ENCODE measurements at regions of chr15 and their contacts with region 1.

Region 1: DNA sequence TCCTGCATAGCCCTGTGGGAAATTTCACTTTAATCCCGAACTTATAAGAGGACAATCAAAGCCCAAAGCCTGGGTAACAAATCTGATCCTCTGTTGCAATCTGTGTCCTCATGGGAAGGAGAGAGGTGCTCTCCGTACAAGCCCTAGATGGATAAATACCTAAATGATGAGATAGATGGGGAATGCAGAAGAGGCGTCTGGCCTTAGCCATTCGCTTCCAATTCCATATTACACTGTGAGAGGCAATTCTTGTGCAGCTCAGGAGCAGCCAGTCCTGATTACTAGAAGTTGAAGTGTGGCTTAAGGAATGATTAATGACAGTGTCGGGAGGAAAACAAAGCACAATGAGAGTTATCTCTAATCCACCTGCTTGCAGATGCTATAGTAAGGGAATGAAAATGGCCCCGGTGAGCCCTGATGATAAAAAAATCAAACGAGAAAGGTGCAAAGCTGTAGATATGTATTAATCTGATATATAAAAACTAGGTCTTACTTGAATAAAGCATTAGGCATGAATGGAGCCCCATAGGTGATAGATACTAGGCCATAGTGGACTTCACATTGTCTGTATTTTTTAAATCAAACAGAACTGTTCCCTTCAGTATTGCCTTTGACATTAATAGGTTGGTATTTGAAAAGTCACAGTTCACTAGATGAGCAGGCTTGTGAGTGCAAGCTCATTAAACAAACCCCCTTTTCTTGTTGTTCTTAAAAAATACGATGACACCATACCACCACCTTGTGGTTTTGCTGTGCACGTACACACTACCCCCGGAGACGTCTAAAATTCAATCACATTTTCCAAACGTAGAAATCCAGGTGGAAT is 54.2 kb upstream of the TMCO5A start:
- DNase-seq: peak in 1 of 2 experiments; percentile 35
- H3K4me3 ChIP-seq: no peak overlapping the region
- H3K4me3 Mint-ChIP-seq: no peak overlapping the region
- H3K27ac Mint-ChIP-seq: no peak overlapping the region
- H3K4me1 ChIP-seq: no peaks in the 10 kb centered on the region
- H3K4me1 Mint-ChIP-seq: no peaks in the 10 kb centered on the region
- H3K27me3 ChIP-seq: no peaks in the 10 kb centered on the region
- H3K27me3 Mint-ChIP-seq: peaks cover 35% of the 10 kb centered on the region
- CTCF ChIP-seq: peak; percentile 76 to 77

Region 2: DNA sequence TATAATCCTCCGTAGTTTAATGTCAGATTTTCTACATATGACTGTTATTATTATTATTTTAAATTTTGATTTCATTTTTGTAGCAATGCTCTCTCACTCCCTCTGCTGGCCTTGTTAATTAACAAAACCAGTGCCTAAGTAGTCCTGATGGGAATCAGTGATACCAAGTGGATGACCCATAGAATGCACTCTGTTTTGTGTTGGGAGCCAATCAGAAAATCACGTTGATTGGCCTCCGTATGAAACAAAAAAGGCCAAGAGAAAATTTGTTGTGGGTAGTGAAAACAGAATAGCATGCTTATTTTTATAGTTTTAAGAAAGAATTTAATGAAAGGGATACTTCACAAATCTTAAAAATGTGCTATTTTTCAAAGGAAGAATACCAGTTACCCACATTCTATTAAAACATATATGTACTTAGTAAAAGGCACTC is 745.5 kb before region 1 on chr15:
- CTCF ChIA-PET with region 1: no interaction called
- POLR2A ChIA-PET with region 1: no interaction called
- intact Hi-C with region 1: loop called (anchors 10 kb)
- DNase-seq: peak in 1 of 2 experiments; percentile 43
- H3K4me3 ChIP-seq: no peak overlapping the region
- H3K4me3 Mint-ChIP-seq: no peak overlapping the region
- H3K27ac Mint-ChIP-seq: no peak overlapping the region
- H3K4me1 ChIP-seq: peaks cover 12% of the 10 kb centered on the region; the same call in 1 of the 2 replicates
- H3K4me1 Mint-ChIP-seq: peaks cover 15% of the 10 kb centered on the region
- H3K27me3 ChIP-seq: no peaks in the 10 kb centered on the region
- H3K27me3 Mint-ChIP-seq: no peaks in the 10 kb centered on the region
- CTCF ChIP-seq: peak; percentile 51 to 67

Region 3: DNA sequence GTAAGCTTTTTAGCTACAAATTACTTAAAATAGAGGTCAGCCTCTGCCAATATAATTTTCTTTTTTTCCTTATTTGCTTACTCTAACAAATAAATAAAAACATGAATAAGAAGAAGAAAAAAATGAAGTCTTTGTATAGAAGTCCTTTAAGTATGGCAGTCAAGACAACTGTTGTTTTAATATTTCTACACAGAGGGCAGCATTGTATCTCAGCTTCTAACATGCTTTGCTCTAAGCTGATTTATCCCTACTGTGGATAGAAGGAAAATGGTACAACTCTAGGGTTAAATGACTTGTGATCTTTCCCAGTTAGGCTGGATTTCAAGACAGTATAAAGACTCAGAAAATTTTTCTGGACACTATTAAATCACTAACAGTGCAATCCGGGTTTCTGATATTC is 675.5 kb before region 1 on chr15:
- CTCF ChIA-PET with region 1: interaction called, 5 read pairs
- POLR2A ChIA-PET with region 1: no interaction called
- intact Hi-C with region 1: loop called (anchors 10 kb)
- DNase-seq: peak in 1 of 2 experiments; percentile 5
- H3K4me3 ChIP-seq: no peak overlapping the region
- H3K4me3 Mint-ChIP-seq: no peak overlapping the region
- H3K27ac Mint-ChIP-seq: no peak overlapping the region
- H3K4me1 ChIP-seq: peaks cover 7% of the 10 kb centered on the region; the same call in 1 of the 2 replicates
- H3K4me1 Mint-ChIP-seq: no peaks in the 10 kb centered on the region
- H3K27me3 ChIP-seq: no peaks in the 10 kb centered on the region
- H3K27me3 Mint-ChIP-seq: peaks cover 4% of the 10 kb centered on the region
- CTCF ChIP-seq: peak; percentile 15 to 19

Region 4: DNA sequence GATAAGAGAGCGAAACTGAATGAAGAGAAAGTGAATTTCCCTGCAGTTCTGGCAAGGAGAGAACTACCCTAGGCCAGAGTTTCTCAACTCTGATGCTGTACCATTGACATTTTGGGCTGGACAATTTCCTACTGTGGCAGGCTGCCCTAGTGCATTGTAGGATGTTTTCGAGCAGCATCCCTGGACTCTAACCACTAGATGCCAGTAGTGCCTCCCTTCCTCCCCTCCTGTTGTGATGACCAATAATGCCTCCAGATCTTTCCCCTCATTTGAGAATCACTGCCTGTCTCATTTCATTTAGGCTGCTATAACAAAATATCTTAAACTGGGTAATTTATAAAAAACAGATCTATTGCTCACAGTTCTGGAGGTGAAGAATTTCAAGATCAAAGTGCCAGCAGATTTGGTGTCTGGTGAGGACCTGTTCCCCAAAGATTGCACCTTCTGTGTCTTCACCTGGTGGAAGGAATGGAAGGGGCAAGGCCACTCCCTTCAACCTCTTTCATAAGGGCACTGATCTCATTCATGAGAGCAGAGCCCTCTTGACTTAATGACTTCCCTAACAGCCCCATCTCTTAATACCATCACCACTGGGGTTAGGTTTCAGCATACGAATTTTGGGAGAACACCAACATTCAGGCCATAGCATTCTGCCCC is 591.0 kb before region 1 on chr15:
- CTCF ChIA-PET with region 1: no interaction called
- POLR2A ChIA-PET with region 1: no interaction called
- intact Hi-C with region 1: loop called (anchors 1 kb)
- DNase-seq: peak; percentile 26 to 41
- H3K4me3 ChIP-seq: no peak overlapping the region
- H3K4me3 Mint-ChIP-seq: no peak overlapping the region
- H3K27ac Mint-ChIP-seq: no peak overlapping the region
- H3K4me1 ChIP-seq: no peaks in the 10 kb centered on the region
- H3K4me1 Mint-ChIP-seq: no peaks in the 10 kb centered on the region
- H3K27me3 ChIP-seq: no peaks in the 10 kb centered on the region
- H3K27me3 Mint-ChIP-seq: peaks cover 7% of the 10 kb centered on the region
- CTCF ChIP-seq: peak in 1 of 2 experiments; percentile 48

Region 5: GRCh38 chr15:37682304-37682703 is 197.9 kb before region 1 on chr15:
- CTCF ChIA-PET with region 1: no interaction called
- POLR2A ChIA-PET with region 1: no interaction called
- intact Hi-C with region 1: loop called (anchors 1 kb)
- DNase-seq: peak in 1 of 2 experiments; percentile 34
- H3K4me3 ChIP-seq: no peak overlapping the region
- H3K4me3 Mint-ChIP-seq: no peak overlapping the region
- H3K27ac Mint-ChIP-seq: no peak overlapping the region
- H3K4me1 ChIP-seq: no peaks in the 10 kb centered on the region
- H3K4me1 Mint-ChIP-seq: no peaks in the 10 kb centered on the region
- H3K27me3 ChIP-seq: no peaks in the 10 kb centered on the region
- H3K27me3 Mint-ChIP-seq: no peaks in the 10 kb centered on the region
- CTCF ChIP-seq: peak; percentile 27 to 30

Region 6: GRCh38 chr15:37764733-37765191 is 115.5 kb before region 1 on chr15:
- CTCF ChIA-PET with region 1: interaction called, 7 read pairs
- POLR2A ChIA-PET with region 1: no interaction called
- intact Hi-C with region 1: loop called (anchors 1 kb)
- DNase-seq: peak; percentile 38 to 45
- H3K4me3 ChIP-seq: no peak overlapping the region
- H3K4me3 Mint-ChIP-seq: no peak overlapping the region
- H3K27ac Mint-ChIP-seq: no peak overlapping the region
- H3K4me1 ChIP-seq: no peaks in the 10 kb centered on the region
- H3K4me1 Mint-ChIP-seq: no peaks in the 10 kb centered on the region
- H3K27me3 ChIP-seq: no peaks in the 10 kb centered on the region
- H3K27me3 Mint-ChIP-seq: peaks cover 3% of the 10 kb centered on the region
- CTCF ChIP-seq: peak; percentile 38 to 51

Region 7: GRCh38 chr15:37789881-37790280 is 90.3 kb before region 1 on chr15:
- CTCF ChIA-PET with region 1: no interaction called
- POLR2A ChIA-PET with region 1: no interaction called
- intact Hi-C with region 1: no loop called
- DNase-seq: no peak
- H3K4me3 ChIP-seq: no peak overlapping the region
- H3K4me3 Mint-ChIP-seq: no peak overlapping the region
- H3K27ac Mint-ChIP-seq: no peak overlapping the region
- H3K4me1 ChIP-seq: no peaks in the 10 kb centered on the region
- H3K4me1 Mint-ChIP-seq: no peaks in the 10 kb centered on the region
- H3K27me3 ChIP-seq: no peaks in the 10 kb centered on the region
- H3K27me3 Mint-ChIP-seq: peaks cover 7% of the 10 kb centered on the region
- CTCF ChIP-seq: no peak